ENCODE measurements at regions of chr2 and their contacts with region 1.

Region 1: GRCh38 chr2:136572335-136572734 is 193.0 kb upstream of the THSD7B start:
- DNase-seq: peak; percentile 61 to 77
- ATAC-seq: peak; percentile 93 to 100 (median 98)
- H3K4me3 ChIP-seq: no peak overlapping the region
- H3K27ac ChIP-seq: peak overlapping the region in 3 of 10 donors; percentile 9 to 58 (median 35)
- H3K4me1 ChIP-seq: peaks cover 0 to 12% (median 0%) of the 10 kb centered on the region in 9 donors
- H3K27me3 ChIP-seq: no peaks in the 10 kb centered on the region
- CTCF ChIP-seq: no peak

Region 2: GRCh38 chr2:136538489-136538888 is 33.8 kb before region 1 on chr2:
- intact Hi-C with region 1: loop called in 1 of 10 experiments (anchors 2 kb)
- DNase-seq: peak; percentile 29 to 32
- ATAC-seq: peak; percentile 62 to 93 (median 77)
- H3K4me3 ChIP-seq: no peak overlapping the region
- H3K27ac ChIP-seq: no peak overlapping the region
- H3K4me1 ChIP-seq: peaks cover 0 to 7% (median 0%) of the 10 kb centered on the region in 9 donors
- H3K27me3 ChIP-seq: no peaks in the 10 kb centered on the region
- CTCF ChIP-seq: no peak

Region 3: GRCh38 chr2:136653861-136654260 is 81.5 kb after region 1 on chr2:
- intact Hi-C with region 1: no loop called
- DNase-seq: peak in 1 of 2 donors; percentile 67
- ATAC-seq: peak; percentile 69 to 95 (median 86)
- H3K4me3 ChIP-seq: no peak overlapping the region
- H3K27ac ChIP-seq: peak overlapping the region in 3 of 10 donors; percentile 11 to 47 (median 32)
- H3K4me1 ChIP-seq: peaks cover 0 to 25% (median 13%) of the 10 kb centered on the region in 9 donors
- H3K27me3 ChIP-seq: no peaks in the 10 kb centered on the region
- CTCF ChIP-seq: peak in 1 of 9 donors; percentile 15

Region 4: DNA sequence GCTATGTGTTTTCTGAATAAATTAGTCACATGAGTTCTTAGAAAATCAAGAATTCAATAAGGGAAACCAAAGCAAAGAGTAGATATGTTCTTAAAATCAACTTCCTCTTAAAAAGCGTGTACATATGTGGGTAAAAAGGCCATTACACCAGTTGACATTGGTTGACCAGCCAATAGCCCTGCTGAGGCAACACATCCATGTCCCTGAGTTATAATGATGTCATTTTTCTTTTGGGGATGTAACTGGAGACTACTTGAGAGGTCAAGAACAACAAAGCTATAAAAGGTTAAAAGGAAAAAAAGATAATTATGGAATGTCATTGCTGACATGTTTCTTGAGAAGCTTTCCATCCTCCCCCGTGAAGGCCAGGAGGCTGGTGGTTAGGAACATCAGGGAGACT is 174.3 kb after region 1 on chr2:
- intact Hi-C with region 1: loop called in 1 of 10 experiments (anchors 10 kb)
- DNase-seq: no peak
- ATAC-seq: no peak
- H3K4me3 ChIP-seq: no peak overlapping the region
- H3K27ac ChIP-seq: no peak overlapping the region
- H3K4me1 ChIP-seq: peaks cover 0 to 12% (median 0%) of the 10 kb centered on the region in 9 donors
- H3K27me3 ChIP-seq: peaks cover 0 to 5% (median 0%) of the 10 kb centered on the region in 7 donors
- CTCF ChIP-seq: no peak